Activated T-helper 1 cell treated with anti-CD3 and anti-CD28 coated beads, Interleukin-12 subunit alpha, Interleukin-12 subunit beta, Interleukin-2, Interleukin-4 antibody, amounts not matched to agents 30 ng/mL and 10 ng/mL and 1 ng/mL, durations not matched to agents 14 hours and 24 hours and 36 hours (primary cell): ENCODE measurements at regions of chr17 and their contacts with region 1.

Region 1: DNA sequence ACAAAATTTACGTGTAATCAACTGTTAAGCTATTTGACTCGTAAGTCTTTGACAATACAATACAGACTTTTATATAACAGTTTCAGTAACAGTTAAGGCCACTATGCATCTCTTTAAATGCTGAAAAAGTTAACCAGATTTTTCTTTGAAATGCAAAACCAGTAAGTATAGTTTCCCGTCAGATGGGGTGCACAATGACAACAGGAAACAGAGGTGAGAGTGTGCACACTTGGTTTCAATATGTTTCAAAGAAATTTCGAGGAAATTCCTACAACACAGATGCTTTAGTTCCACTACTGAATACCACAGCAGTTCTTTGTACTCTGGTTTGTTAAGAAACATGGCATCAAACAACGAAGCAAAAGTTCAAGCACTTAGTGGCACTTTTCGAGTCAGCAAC is 48.4 kb downstream of the RNF157 start:
- DNase-seq: peak; percentile 64
- H3K4me3 Mint-ChIP-seq: peak overlapping the region; percentile 80
- H3K27ac Mint-ChIP-seq: peak overlapping the region; percentile 92
- H3K4me1 Mint-ChIP-seq: peaks cover 79% of the 10 kb centered on the region
- H3K27me3 Mint-ChIP-seq: no peaks in the 10 kb centered on the region

Region 2: DNA sequence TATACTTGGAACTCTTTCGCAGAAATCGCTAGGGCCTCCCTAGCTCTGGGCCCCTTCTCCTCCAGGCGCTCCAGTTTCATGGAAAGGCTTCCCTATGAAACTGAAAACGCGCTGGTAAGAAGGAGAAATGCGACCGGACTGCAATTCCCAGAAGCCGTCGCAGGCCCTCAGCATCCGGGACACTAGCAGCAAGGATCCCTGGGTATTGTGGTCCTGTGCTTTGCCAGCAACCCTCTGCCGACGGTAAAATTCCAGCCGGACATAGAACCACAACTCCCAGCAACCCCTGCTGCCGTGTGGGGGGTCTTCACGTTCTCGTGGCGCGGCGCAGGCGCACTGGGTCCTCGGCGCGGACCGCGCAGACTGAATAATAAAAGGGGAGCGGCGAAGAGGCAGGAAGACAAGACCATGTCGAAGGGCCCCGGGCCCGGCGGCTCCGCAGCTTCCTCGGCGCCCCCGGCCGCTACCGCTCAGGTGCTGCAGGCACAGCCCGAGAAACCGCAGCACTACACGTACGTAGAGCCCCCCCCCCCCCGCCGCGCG is 407.4 kb before region 1 on chr17 and contains the start of gene UNK:
- intact Hi-C with region 1: loop called (anchors 10 kb)
- DNase-seq: peak; percentile 94
- H3K4me3 Mint-ChIP-seq: peak within 1 kb of the TSS; percentile 92
- H3K27ac Mint-ChIP-seq: peak within 1 kb of the TSS; percentile 99
- H3K4me1 Mint-ChIP-seq: peaks cover 47% of the 10 kb centered on the region
- H3K27me3 Mint-ChIP-seq: peaks cover 2% of the 10 kb centered on the region
- total RNA-seq, gene UNK: 26.0 and 26.9 TPM in 2 replicates

Region 3: DNA sequence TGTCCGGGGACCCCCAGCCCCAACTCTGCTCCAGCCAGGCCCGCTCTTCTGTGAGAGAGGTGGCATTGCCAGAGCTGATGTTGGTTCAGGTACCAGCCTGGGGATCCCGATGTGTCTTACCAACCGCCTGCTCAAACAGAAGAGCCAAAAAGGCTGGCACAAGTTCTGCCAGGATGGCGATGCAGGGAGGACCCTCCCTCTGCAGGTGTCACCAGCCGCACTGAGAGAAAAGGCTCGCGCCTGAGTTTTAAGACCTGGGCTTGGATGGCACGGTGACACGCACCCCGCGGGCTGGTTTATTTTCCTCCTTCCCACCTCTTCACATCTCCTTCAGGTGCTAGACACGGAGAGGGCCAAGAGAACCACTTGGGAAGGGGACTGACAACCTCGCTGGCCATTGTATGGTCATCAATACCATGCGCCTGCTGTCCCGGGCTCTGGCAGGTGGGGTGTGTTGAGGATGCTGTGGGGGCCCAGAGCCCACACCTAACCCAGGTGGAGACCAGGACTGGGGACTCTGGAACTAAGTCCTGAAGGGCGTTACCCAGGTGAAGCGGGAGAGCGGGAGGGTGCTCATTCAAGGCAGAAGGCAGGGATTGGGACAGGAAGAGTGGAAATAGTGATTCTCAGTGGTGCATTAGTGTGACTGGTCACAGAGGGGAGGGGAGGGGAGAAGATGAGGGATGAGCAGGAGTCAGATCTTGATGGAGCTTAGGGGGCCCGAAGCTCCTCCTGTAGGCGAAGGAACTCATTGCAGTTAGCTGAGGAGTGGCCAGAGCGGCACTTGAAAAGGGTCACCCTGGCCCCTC is 67.1 kb before region 1 on chr17:
- intact Hi-C with region 1: no loop called
- DNase-seq: no peak
- H3K4me3 Mint-ChIP-seq: no peak overlapping the region
- H3K27ac Mint-ChIP-seq: no peak overlapping the region
- H3K4me1 Mint-ChIP-seq: peaks cover 21% of the 10 kb centered on the region
- H3K27me3 Mint-ChIP-seq: peaks cover 3% of the 10 kb centered on the region

Region 4: DNA sequence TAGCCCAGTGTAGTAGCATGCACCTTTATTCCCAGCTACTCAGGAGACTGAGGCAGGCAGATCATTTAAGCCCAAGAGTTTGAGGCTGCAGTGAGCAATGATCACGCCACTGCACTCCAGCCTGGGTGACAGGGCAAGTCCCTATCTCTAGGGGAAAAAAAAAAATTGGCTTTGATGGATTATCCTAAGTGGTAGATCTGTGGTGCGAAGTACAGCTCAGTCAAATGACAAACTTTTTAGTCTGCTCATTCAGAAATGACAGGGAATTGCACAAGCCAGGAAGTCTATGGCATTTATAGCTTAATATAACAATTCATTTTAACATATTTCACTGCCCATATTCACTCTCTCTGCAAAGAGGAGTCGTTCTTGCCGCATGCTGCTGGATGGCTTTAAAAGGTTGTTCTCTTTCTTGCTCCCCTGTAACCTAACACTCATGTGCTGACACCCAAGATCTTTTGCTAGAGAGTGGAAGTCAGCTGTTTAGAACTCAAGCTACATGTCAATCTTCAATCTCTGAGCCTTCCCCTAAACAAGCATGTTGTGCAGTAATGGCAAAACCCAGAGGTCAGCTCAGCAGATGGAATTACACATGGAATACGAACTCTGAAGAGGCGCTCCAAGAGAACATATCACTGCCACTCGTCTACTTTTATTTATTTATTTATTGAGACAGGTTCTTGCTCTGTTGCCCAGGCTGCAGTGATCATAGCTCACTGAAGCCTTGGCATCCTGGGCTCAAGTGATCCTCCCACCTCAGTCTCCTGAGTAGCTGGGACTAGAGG is 15.6 kb after region 1 on chr17:
- intact Hi-C with region 1: loop called (anchors 2 kb)
- DNase-seq: no peak
- H3K4me3 Mint-ChIP-seq: no peak overlapping the region
- H3K27ac Mint-ChIP-seq: peak overlapping the region; percentile 53
- H3K4me1 Mint-ChIP-seq: peaks cover 66% of the 10 kb centered on the region
- H3K27me3 Mint-ChIP-seq: no peaks in the 10 kb centered on the region

Region 5: DNA sequence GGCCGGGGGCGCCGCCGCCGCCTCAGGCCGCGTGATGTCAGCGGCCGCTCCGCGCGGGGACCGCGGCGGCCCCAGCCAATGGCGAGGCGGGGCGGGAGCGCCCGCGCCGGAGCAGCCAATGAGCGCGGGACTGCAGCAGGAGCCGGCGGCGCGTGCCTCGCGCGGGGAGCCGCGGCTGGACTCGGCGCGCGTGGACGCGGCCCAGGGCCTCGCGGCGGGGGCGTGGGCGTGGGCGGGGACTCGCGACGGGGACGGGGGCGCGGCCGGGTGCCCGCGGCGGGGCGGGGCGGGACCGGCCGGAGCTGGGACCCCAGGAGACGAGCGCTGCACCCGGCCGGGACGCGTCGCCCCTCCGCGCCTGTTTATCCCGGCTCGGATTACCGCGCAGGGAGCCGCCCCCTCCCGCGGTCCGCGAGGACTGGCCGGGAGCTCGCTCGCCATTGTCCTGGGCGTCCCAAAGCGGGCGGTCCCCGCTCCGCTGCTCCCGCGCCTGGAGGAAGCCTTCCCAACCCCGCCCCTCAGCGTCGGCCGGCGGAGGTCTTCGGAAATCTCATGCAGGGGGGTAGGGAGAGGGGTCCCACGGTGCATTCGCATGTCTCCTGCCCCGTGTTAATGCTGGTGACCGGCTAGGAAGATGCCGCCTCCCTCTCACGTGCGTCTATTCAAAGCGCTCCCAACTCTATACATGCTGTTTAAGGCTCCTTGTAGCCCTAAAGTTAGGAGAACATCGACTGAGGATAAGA is 48.7 kb after region 1 on chr17 and contains the start of gene RNF157:
- intact Hi-C with region 1: loop called (anchors 2 kb)
- DNase-seq: peak; percentile 75
- H3K4me3 Mint-ChIP-seq: peak within 1 kb of the TSS; percentile 90
- H3K27ac Mint-ChIP-seq: peak within 1 kb of the TSS; percentile 90
- H3K4me1 Mint-ChIP-seq: peaks cover 69% of the 10 kb centered on the region
- H3K27me3 Mint-ChIP-seq: no peaks in the 10 kb centered on the region
- total RNA-seq, gene RNF157: 50.4 and 51.7 TPM in 2 replicates

Region 6: GRCh38 chr17:76264755-76265596 is 73.1 kb after region 1 on chr17 and contains the start of gene UBALD2:
- intact Hi-C with region 1: loop called (anchors 1 kb)
- DNase-seq: peak; percentile 99
- H3K4me3 Mint-ChIP-seq: peak within 1 kb of the TSS; percentile 94
- H3K27ac Mint-ChIP-seq: peak within 1 kb of the TSS; percentile 94
- H3K4me1 Mint-ChIP-seq: peaks cover 63% of the 10 kb centered on the region
- H3K27me3 Mint-ChIP-seq: no peaks in the 10 kb centered on the region
- total RNA-seq, gene UBALD2: 206 and 217 TPM in 2 replicates

Region 7: DNA sequence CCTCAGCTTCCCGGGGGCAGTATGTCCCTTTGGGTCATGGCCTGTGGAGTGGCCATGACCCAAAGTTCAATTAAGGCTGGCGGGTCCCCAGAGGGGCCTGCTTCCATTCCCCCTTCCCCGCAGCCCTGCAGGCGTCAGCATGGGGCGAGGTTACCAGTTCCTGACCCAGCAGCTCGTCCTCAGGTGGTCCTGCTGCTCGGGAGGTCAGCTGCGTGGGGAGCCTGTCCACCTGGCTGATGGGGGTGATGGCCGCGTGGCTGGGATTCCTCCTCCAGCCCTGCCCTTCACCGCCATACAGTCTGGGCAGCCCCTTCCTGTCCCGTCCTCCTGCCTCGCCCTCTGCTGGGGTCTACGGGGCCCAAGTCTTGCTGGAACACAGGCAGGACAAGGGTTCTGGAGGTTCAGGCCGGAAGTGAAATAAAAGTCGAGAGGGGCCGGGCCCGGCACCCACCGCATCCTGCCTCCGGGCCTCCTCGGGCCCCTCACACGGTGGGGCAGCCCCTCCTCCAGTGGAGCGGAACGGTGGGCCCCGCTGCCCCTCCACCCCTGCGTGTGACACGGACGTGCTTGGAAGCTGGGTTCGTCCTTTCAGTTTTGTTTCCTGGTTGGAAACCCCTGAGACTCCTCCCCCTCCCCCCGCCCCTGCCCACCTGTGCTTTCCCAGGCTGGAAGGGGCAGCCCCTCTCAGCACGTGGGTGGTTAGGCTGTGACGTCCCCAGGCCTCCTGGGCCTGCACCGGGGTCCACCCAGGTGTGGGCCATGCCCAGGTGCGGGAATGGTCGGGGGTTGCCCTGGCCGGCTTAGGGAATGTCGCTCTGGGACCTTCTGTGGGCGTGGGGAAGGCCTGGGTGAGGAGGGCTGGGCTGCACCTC is 80.0 kb after region 1 on chr17:
- intact Hi-C with region 1: loop called (anchors 1 kb)
- DNase-seq: peak; percentile 70
- H3K4me3 Mint-ChIP-seq: peak overlapping the region; percentile 79
- H3K27ac Mint-ChIP-seq: peak overlapping the region; percentile 94
- H3K4me1 Mint-ChIP-seq: peaks cover 45% of the 10 kb centered on the region
- H3K27me3 Mint-ChIP-seq: no peaks in the 10 kb centered on the region

Region 8: GRCh38 chr17:76353599-76354316 is 161.9 kb after region 1 on chr17 and contains the start of gene PRPSAP1:
- intact Hi-C with region 1: no loop called
- DNase-seq: peak; percentile 82
- H3K4me3 Mint-ChIP-seq: peak within 1 kb of the TSS; percentile 93
- H3K27ac Mint-ChIP-seq: peak within 1 kb of the TSS; percentile 99
- H3K4me1 Mint-ChIP-seq: peaks cover 28% of the 10 kb centered on the region
- H3K27me3 Mint-ChIP-seq: peaks cover 3% of the 10 kb centered on the region
- total RNA-seq, gene PRPSAP1: 41.2 and 44.0 TPM in 2 replicates